ENCODE measurements at regions of chr15 and their contacts with region 1.

Region 1: DNA sequence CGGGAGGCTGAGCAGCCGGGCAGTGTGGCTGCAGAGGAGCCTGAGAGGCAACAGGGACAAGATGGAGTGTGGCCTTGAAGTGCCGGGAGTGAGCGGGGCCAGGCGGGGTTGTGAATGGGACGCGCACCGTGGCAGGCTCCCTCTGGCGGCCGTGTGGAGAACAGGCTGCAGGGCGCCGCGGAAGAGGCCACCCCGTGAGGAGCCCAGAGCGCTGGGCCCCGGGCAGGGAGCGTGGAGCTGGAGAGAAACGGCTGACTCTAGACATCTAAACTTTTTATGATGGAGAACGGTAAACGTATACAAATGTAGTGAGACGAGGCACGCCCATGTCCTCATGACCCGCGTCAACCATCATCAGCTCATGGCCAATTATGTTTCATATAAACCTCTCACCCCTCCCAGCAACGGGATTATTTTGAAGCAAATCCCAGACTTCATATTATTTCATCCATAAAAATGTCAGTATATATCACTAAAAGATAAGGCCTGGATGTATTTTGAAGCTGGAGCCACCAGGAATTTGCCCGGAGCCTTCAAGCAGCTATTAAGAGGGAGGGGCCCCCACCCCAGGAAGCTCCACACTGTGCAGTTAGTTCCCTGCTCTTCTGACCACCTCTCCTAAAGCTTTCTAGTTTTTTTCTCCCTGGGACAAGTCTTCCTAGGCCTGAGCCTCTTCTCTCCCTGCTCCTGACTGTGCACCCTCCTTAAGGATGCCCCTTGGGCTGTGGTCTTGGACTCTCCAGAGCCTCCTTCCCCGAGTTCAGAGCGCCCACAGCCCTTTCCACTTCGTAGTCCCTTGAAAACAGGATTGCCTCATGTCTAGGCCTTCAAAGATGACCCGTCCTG is 149.4 kb downstream of the SMAD6 start:
- DNase-seq: peak; percentile 83
- H3K4me3 ChIP-seq: no peak overlapping the region
- H3K27ac ChIP-seq: no peak overlapping the region
- H3K4me1 ChIP-seq: peaks cover 3% of the 10 kb centered on the region
- CTCF ChIP-seq: peak; percentile 96

Region 2: DNA sequence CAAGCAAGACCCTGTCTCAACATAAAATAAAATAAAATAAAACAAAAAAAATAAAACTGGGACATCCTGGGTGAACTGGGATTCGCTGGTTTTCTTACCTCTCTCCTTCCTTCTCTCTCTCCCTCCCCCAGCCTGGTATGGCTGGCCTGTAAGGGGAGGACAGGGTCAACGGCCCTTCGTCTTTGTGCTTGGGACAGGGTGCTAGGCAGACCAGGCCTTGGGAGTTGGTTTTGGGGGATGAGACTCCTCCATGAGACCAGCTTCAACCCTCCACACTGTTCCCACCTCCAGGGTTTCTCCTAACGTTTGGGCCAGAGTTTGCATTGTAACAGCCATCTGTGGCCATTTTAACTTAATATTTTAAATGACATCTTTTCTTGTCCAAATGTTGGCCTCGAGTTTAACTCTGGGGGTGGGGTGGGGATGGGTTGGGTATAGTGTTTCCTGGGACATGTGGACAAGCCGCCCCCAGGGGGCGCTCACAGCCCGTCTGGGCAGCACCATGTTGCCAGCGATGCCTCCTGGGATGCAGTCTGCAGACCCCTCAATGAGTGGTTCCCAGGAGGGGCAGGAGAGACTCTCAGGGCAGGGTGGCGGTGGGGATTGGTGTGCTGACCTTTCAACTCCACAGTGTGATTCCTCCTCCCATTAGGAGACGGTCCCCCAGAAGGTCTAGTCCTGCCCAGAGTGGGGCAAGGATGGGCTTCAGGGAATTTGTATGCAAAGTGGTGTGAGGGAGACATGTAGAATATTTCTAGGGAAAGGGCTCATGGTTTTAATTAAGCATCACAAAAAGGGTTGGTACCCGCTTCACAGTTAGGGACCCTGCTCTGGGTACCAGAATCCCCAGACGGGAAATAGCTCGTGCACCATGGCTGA is 247.9 kb before region 1 on chr15:
- CTCF ChIA-PET with region 1: no interaction called
- POLR2A ChIA-PET with region 1: no interaction called
- intact Hi-C with region 1: loop called (anchors 1 kb)
- DNase-seq: peak; percentile 83
- H3K4me3 ChIP-seq: no peak overlapping the region
- H3K27ac ChIP-seq: no peak overlapping the region
- H3K4me1 ChIP-seq: no peaks in the 10 kb centered on the region
- CTCF ChIP-seq: peak; percentile 95

Region 3: DNA sequence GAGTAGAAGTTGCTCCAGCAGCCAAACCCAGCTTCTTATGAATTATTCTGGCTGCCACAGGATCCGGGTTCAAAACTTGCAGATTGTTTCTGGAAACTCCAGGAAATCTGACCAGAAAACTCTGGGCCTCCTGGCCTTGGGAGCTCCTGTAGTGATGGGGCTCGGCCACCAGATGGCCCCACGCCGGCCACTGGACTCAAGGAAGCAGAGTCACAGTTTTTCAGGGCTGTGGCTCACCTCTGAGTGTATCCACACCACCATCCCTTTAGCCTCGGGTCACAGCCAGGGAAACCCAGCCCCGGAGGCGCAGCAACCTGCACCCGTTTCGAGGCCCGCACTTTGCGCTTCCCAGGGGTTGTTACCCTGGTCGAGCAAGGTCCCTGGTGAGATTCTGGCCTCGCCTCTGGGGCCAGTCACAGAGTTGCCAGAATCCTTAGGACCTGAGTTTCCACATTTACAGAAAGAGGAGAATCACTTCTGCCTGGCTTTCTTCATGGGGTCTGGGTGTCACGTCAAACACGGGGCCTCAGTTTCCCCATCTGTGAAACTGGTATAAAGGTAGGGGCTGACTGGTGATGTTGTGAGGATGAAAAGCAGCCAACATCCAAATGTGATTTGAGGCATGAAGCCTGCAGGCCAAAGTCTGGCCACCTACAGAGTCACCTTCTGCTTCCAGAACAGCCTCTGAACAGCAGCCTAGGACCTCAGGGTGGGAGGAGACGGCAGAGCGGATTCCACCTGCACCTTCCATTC is 232.1 kb before region 1 on chr15:
- CTCF ChIA-PET with region 1: interaction called, 4 read pairs
- POLR2A ChIA-PET with region 1: interaction called, 3 read pairs
- intact Hi-C with region 1: loop called (anchors 1 kb)
- DNase-seq: peak; percentile 74
- H3K4me3 ChIP-seq: no peak overlapping the region
- H3K27ac ChIP-seq: no peak overlapping the region
- H3K4me1 ChIP-seq: no peaks in the 10 kb centered on the region
- CTCF ChIP-seq: peak; percentile 90

Region 4: DNA sequence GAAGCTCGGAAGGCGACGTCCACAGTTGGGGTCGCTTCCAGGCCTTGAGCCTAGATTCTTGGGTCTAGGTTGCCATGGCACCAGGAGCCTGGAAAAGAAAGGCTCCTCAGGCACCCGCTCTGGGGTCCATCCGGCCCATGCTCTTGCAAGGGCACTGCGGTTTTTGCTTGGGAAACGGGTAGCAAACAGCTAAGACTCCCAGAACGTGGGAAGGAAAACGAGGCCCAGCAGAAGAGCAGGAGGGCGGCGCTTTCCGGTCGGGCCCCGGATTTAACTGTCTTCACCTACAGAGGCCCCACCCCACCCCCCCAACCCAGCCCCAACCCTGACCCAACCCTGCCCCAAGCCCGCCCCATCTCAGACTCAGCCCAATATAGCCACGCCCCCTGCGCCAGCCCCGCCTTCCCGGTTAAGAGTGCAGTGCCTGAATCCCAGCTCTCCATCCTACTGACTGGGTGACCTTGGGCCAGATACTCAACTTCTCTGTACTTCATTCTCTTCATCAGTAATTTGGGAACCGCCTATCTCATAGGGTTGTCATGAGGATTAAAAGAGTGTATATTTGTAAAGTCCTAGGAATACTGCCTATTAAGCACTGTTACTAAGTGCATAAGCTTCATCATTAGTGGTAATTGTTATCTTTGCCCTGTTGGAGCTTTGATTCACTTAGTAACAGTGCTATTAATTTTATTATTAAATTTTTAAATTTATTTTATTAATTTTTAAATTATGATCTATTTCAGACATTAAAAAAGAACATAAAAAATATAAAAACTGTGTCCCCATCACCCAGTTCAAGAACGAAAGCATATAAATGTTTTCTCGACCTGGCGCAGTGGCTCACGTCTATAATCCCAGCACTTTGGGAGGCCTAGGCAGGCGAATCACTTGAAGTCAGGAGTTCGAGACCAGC is 177.8 kb before region 1 on chr15:
- CTCF ChIA-PET with region 1: no interaction called
- POLR2A ChIA-PET with region 1: no interaction called
- intact Hi-C with region 1: no loop called
- DNase-seq: peak; percentile 84
- H3K4me3 ChIP-seq: no peak overlapping the region
- H3K27ac ChIP-seq: peak overlapping the region; percentile 34
- H3K4me1 ChIP-seq: peaks cover 15% of the 10 kb centered on the region
- CTCF ChIP-seq: no peak

Region 5: DNA sequence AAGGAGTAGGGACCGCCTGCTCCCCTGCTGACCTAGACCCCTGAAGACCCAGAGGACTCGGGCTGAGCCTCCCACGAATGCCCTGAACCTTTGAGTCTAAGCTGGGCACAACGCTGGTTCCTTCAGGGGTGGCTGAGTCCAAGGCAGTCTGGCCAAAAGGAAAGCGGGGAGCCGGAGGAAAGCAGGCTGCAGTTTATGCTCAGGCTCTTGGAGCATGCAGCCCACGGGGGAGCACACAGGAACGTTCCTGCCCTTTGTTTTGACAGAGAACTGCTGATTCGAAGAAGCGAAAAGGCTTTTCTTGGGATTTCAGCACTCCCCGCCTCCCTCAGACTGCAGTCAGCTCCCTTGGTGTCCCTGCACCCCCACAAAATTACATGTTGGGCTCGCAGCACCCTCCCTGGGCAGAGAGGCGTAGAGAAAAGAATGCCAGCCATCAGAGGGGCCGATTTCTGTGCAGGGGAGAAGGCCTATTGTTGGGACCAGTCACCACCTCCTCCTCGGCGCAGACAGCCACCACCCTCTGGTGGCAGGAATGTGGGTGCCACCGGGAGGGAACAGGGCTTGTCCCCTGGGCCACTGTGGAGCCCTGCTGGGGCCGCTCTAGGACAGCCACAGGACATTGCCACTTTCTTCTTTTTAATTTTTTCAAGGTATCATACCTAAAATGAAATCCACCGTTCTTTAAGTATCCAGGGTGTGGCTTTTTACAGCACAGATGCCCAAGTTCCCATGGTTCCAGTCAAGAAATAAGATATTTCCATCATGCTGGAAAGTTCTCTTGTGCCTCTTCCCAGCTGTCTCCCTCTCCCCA is 77.2 kb before region 1 on chr15:
- CTCF ChIA-PET with region 1: no interaction called
- POLR2A ChIA-PET with region 1: no interaction called
- intact Hi-C with region 1: loop called (anchors 1 kb)
- DNase-seq: peak; percentile 71
- H3K4me3 ChIP-seq: no peak overlapping the region
- H3K27ac ChIP-seq: no peak overlapping the region
- H3K4me1 ChIP-seq: no peaks in the 10 kb centered on the region
- CTCF ChIP-seq: peak; percentile 88

Region 6: GRCh38 chr15:66789029-66790025 is 62.1 kb before region 1 on chr15:
- CTCF ChIA-PET with region 1: interaction called, 5 read pairs
- POLR2A ChIA-PET with region 1: interaction called, 6 read pairs
- intact Hi-C with region 1: loop called (anchors 1 kb)
- DNase-seq: peak; percentile 61
- H3K4me3 ChIP-seq: no peak overlapping the region
- H3K27ac ChIP-seq: no peak overlapping the region
- H3K4me1 ChIP-seq: no peaks in the 10 kb centered on the region
- CTCF ChIP-seq: peak; percentile 79

Measured in OCI-LY7 (cell line).